ENCODE measurements at regions of chr1 and their contacts with region 1.

Region 1: DNA sequence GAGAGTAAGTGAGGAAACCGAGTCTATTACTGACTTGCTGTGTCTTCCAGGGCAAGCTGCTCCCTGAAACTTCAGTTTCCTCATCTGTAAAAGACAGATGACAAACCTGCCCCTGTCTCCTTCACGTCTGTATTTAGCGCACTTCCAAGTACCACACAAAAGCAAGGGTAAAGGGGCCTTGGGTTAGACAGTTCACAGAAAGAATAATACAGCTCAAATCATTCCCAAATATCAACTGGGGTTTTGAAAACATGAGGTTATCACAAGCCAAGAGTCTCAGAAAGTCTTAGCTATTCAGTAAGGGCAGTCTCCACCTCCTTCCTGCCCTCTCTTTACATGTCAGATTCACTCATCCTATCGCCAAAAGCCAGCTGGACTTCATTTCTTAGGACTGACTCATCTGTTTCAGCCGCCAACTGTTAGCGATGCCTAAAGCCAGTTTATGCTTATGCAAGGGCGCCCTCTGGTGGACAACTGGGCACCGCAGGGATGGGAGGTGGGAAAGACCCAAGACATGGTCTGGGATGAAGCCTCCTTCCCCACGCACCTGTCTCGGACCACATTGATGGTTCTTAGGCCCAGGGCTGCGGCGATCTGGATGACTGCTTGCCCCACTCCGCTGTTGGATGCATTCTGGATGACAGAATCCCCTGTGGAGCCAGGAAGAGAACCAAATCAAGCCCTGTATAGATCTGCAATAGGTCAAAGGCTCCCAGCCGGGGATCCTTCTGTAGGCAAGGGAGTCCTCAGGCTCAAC is 21.1 kb upstream of the SRSF4 start:
- DNase-seq: peak; percentile 94 to 97
- H3K4me3 ChIP-seq: peak overlapping the region in 1 of 3 donors; percentile 35
- H3K27ac ChIP-seq: peak overlapping the region; percentile 92 to 93
- H3K4me1 ChIP-seq: peaks cover 5 to 6% of the 10 kb centered on the region in 2 donors
- H3K27me3 ChIP-seq: no peaks in the 10 kb centered on the region
- CTCF ChIP-seq: peak; percentile 96 to 99 (median 97)
- POLR2A ChIP-seq: no peak

Region 2: GRCh38 chr1:28775121-28775944 is 427.4 kb before region 1 on chr1:
- intact Hi-C with region 1: loop called (anchors 10 kb)
- DNase-seq: peak; percentile 70 to 77
- H3K4me3 ChIP-seq: peak overlapping the region; percentile 39 to 68 (median 57)
- H3K27ac ChIP-seq: peak overlapping the region; percentile 86 to 87
- H3K4me1 ChIP-seq: no peaks in the 10 kb centered on the region
- H3K27me3 ChIP-seq: no peaks in the 10 kb centered on the region
- CTCF ChIP-seq: no peak
- POLR2A ChIP-seq: no peak

Region 3: GRCh38 chr1:28905921-28906666 is 296.7 kb before region 1 on chr1:
- intact Hi-C with region 1: loop called (anchors 10 kb)
- DNase-seq: no peak
- H3K4me3 ChIP-seq: no peak overlapping the region
- H3K27ac ChIP-seq: no peak overlapping the region
- H3K4me1 ChIP-seq: no peaks in the 10 kb centered on the region
- H3K27me3 ChIP-seq: no peaks in the 10 kb centered on the region
- CTCF ChIP-seq: no peak
- POLR2A ChIP-seq: no peak